ENCODE measurements at regions of chr4 and their contacts with region 1.

Region 1: DNA sequence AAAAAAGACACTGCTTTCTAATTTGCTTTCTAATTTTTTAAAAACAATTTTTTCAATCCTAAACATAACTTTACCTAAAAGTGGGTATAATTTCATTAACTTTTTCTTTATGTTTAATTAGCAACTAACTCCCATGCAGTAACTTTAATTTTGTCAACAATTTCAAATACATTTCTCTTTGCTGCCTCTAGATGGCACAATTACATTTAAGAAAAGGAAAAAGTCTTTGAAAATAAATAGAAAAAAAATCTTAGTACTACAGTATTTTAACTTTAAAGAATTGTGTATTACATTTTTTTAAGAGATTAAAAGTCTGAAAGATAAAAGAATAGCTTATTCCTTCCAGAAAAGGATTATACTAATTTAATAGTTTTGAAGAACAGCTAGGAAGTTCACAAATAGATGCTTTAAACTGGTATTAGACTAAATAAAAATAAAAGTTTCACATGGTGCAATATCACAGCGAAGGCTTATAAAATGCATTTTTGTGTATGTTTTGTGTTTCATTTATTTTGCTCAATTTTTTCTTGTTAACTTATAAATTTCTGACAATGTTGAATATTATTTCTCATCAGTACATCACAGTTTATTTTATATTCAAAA is 105.1 kb downstream of the ADGRA3 start:
- DNase-seq: no peak
- H3K4me3 ChIP-seq: no peak overlapping the region
- H3K27ac ChIP-seq: no peak overlapping the region
- H3K4me1 ChIP-seq: no peaks in the 10 kb centered on the region
- H3K27me3 ChIP-seq: no peaks in the 10 kb centered on the region
- CTCF ChIP-seq: peak; percentile 57

Region 2: DNA sequence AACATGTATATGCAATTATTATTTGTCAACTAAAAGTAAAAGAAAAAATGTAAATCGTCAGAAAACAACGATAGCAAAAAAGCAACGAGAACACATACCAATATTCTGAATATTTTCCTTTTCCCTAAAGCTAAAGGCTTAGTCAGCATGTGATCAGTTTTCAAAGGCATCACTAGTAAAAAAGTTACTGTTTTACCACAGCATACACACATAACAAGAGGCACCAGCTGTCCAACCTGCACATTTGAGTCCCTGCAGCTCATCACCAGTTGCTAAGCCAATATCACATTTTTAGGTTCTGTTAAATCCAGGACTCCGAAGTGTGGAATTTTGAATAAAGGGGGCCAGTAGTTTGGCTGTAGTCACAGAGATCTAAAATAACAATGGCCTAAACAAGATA is 98.6 kb before region 1 on chr4:
- intact Hi-C with region 1: no loop called
- DNase-seq: no peak
- H3K4me3 ChIP-seq: no peak overlapping the region
- H3K27ac ChIP-seq: no peak overlapping the region
- H3K4me1 ChIP-seq: no peaks in the 10 kb centered on the region
- H3K27me3 ChIP-seq: no peaks in the 10 kb centered on the region
- CTCF ChIP-seq: no peak

Region 3: DNA sequence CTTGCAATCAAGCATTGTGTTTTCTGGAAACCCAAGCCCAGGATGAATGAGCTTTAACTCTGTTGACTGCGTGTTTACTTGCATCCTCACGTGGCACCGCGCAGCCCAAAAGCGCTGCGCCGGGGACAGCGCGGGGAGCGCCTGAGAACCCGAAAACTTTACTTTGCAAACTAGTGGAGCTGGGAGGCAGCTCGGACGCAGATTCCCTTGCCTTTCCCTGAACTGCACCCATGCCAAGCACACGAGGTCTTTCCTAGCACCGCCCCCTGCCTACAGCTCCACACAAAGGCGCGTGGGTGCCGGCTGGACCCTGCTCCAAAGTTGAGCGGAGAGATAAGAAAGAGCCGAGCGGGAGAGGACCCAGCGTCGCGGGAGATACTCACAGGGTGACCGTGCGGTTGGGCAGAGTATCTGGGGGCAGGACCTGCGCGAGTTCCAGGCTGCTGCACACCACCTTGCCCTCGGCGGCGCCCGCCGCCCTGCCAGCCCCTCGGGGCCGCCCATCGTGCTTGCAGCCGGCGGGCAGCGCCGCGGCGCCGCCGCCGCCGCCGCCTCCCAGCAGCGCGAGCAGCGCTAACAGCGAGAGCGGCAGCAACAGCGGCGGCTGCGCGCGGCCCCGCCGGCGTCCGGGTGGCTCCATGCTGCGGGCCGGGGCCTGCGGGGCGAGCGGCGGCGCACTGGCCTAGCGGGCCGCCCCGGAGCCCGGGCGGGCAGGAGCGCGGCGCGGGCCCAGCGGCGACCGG is 104.6 kb after region 1 on chr4:
- intact Hi-C with region 1: loop called (anchors 10 kb)
- DNase-seq: peak; percentile 78
- H3K4me3 ChIP-seq: peak overlapping the region; percentile 49
- H3K27ac ChIP-seq: peak overlapping the region; percentile 80
- H3K4me1 ChIP-seq: peaks cover 4% of the 10 kb centered on the region
- H3K27me3 ChIP-seq: no peaks in the 10 kb centered on the region
- CTCF ChIP-seq: no peak

Region 4: GRCh38 chr4:22607382-22607781 is 196.6 kb after region 1 on chr4:
- intact Hi-C with region 1: loop called (anchors 2 kb)
- DNase-seq: peak; percentile 48
- H3K4me3 ChIP-seq: no peak overlapping the region
- H3K27ac ChIP-seq: no peak overlapping the region
- H3K4me1 ChIP-seq: no peaks in the 10 kb centered on the region
- H3K27me3 ChIP-seq: no peaks in the 10 kb centered on the region
- CTCF ChIP-seq: peak; percentile 47

Region 5: DNA sequence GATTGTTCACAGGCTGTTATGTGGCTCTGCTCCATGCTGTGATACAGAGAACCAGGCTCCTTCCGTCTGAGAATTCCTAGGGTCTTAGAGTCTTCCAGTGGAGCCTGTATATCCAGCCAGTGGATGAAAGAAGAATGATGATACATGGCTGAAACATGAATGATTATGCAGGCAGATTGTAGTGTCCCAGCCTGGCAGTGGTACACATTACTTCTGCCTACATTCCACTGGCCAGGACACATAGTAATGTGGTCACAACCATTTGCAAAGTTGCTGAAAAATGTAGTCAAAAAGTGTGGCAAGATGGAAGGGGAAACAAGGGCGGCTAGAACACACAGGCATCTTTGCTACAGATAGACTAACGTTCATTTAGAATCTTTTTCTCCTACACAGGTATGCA is 277.5 kb after region 1 on chr4:
- intact Hi-C with region 1: loop called (anchors 5 kb)
- DNase-seq: no peak
- H3K4me3 ChIP-seq: no peak overlapping the region
- H3K27ac ChIP-seq: no peak overlapping the region
- H3K4me1 ChIP-seq: peaks cover 3% of the 10 kb centered on the region
- H3K27me3 ChIP-seq: no peaks in the 10 kb centered on the region
- CTCF ChIP-seq: no peak

Region 6: DNA sequence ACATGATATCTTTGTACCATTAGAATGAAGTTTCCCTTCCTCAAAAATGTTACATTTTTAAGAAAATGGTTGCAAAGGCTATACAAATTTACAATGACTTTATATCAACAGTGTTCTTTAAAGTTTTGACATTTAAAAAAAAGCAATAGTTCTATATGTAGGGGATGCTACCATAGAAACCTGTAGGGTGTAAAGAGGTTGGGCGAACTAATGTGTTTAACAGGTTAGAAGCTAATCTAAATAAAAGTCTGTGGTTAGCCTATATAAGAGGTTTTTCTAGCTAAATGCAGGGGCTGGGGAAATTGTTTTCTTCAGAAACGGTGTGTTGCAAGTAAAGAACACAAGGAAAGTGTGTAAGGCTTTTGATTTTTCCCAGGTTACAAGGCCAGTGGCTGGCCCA is 355.3 kb after region 1 on chr4:
- intact Hi-C with region 1: no loop called
- DNase-seq: no peak
- H3K4me3 ChIP-seq: no peak overlapping the region
- H3K27ac ChIP-seq: no peak overlapping the region
- H3K4me1 ChIP-seq: no peaks in the 10 kb centered on the region
- H3K27me3 ChIP-seq: no peaks in the 10 kb centered on the region
- CTCF ChIP-seq: no peak